Head of caudate nucleus (tissue), 42 donors: ENCODE measurements at regions of chr9 and their contacts with region 1.

Region 1: DNA sequence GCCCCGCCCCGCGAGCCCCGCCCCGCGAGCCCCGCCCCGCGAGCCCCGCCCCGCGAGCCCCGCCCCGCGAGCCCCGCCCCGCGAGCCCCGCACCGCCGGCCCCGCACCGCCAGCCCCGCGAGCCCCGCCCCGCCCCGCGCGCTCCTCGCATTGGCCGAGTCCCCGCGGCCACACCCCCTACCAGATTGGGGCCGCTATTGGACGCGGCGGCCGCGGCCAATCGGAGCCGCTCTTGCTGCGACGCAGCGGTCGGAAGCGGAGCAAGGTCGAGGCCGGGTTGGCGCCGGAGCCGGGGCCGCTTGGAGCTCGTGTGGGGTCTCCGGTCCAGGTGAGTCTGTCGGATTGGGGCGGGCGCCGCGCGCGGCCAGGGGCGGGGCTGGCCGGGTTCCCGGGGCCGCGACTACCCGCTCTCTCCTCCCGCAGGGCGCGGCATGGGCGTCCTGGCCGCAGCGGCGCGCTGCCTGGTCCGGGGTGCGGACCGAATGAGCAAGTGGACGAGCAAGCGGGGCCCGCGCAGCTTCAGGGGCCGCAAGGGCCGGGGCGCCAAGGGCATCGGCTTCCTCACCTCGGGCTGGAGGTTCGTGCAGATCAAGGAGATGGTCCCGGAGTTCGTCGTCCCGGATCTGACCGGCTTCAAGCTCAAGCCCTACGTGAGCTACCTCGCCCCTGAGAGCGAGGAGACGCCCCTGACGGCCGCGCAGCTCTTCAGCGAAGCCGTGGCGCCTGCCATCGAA is at the start of gene MRPL41:
- DNase-seq: peak; percentile 70 to 98 (median 91)

Region 2: GRCh38 chr9:137590462-137591383 is 38.9 kb after region 1 on chr9 and contains the start of gene ZMYND19:
- intact Hi-C with region 1: loop called (anchors 5 kb)
- DNase-seq: peak in 41 of 42 donors; percentile 51 to 91 (median 84)

Region 3: GRCh38 chr9:138007911-138008841 is 456.4 kb after region 1 on chr9:
- intact Hi-C with region 1: no loop called
- DNase-seq: peak in 15 of 42 donors; percentile 3 to 37 (median 11)